SK-N-SH (cell line): ENCODE measurements at regions of chr4 and their contacts with region 1.

Region 1: DNA sequence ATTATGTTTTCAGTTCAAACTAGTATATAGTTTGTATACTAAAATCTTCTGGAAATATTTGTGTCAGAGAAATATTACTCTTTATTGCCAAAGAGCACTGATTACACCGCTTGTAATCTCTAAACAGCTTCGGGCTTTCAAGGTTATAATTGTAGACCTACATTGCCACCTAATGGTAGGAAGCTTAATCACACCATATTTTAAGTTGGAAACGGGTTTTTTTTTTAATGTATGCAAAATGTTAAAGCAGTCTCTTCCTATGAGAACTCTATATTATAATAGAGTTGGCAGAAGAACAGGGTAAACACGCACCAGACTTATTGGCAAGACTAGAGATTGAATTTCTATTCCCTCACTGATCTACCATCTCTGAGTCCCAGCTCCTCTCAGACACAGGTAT is 19.5 kb upstream of the NFXL1 start:
- DNase-seq: peak; percentile 36
- H3K4me3 ChIP-seq: no peak overlapping the region; a peak in 1 of 4 replicates
- H3K27ac ChIP-seq: no peak overlapping the region
- H3K4me1 ChIP-seq: peaks cover 11 to 15% of the 10 kb centered on the region in 2 experiments
- H3K27me3 ChIP-seq: no peaks in the 10 kb centered on the region
- CTCF ChIP-seq: peak; percentile 78
- EP300 ChIP-seq: no peak
- RAD21 ChIP-seq: peak; percentile 86

Region 2: DNA sequence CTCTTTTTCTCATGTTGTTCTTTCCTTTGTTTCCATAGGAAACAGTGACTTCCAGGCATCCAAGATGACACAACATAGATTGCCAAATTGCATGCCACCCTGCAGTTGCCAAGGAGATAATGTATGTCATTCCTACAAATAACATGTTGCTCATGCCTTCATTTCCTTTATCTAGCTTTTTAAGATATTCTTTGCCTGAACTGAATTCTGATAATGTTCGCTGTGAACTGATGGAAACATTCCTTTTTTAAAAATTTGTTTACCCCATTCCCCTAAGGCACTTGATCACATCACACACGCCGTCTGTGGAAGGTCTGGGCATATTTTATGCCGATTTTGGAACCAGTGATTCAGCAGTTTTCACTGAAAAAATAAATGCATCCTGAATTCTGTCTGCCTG is 986.8 kb before region 1 on chr4:
- CTCF ChIA-PET with region 1: no interaction called
- POLR2A ChIA-PET with region 1: no interaction called
- DNase-seq: no peak
- H3K4me3 ChIP-seq: no peak overlapping the region
- H3K27ac ChIP-seq: no peak overlapping the region
- H3K4me1 ChIP-seq: peaks cover 0 to 15% of the 10 kb centered on the region in 2 experiments; a peak in 1 of 4 replicates
- H3K27me3 ChIP-seq: no peaks in the 10 kb centered on the region
- CTCF ChIP-seq: no peak
- EP300 ChIP-seq: no peak
- RAD21 ChIP-seq: no peak

Region 3: GRCh38 chr4:47662975-47663374 is 270.9 kb before region 1 on chr4:
- CTCF ChIA-PET with region 1: interaction called, 60 read pairs
- POLR2A ChIA-PET with region 1: no interaction called
- DNase-seq: no peak
- H3K4me3 ChIP-seq: no peak overlapping the region
- H3K27ac ChIP-seq: no peak overlapping the region
- H3K4me1 ChIP-seq: no peaks in the 10 kb centered on the region
- H3K27me3 ChIP-seq: no peaks in the 10 kb centered on the region
- CTCF ChIP-seq: peak; percentile 55
- EP300 ChIP-seq: no peak
- RAD21 ChIP-seq: no peak

Region 4: GRCh38 chr4:47668810-47669408 is 264.9 kb before region 1 on chr4:
- CTCF ChIA-PET with region 1: interaction called, 60 read pairs
- POLR2A ChIA-PET with region 1: no interaction called
- DNase-seq: peak; percentile 43
- H3K4me3 ChIP-seq: no peak overlapping the region
- H3K27ac ChIP-seq: no peak overlapping the region
- H3K4me1 ChIP-seq: peaks cover 0 to 2% of the 10 kb centered on the region in 2 experiments; a peak in 1 of 4 replicates
- H3K27me3 ChIP-seq: no peaks in the 10 kb centered on the region
- CTCF ChIP-seq: peak; percentile 88
- EP300 ChIP-seq: no peak
- RAD21 ChIP-seq: peak; percentile 81

Region 5: GRCh38 chr4:47686294-47686872 is 247.5 kb before region 1 on chr4:
- CTCF ChIA-PET with region 1: interaction called, 12 read pairs
- POLR2A ChIA-PET with region 1: no interaction called
- DNase-seq: peak; percentile 42
- H3K4me3 ChIP-seq: no peak overlapping the region; a peak in 1 of 4 replicates
- H3K27ac ChIP-seq: no peak overlapping the region
- H3K4me1 ChIP-seq: no peaks in the 10 kb centered on the region
- H3K27me3 ChIP-seq: no peaks in the 10 kb centered on the region
- CTCF ChIP-seq: peak; percentile 66
- EP300 ChIP-seq: no peak
- RAD21 ChIP-seq: peak; percentile 61